Ascending aorta (tissue), 2 donors: ENCODE measurements at regions of chr12 and their contacts with region 1.

Region 1: DNA sequence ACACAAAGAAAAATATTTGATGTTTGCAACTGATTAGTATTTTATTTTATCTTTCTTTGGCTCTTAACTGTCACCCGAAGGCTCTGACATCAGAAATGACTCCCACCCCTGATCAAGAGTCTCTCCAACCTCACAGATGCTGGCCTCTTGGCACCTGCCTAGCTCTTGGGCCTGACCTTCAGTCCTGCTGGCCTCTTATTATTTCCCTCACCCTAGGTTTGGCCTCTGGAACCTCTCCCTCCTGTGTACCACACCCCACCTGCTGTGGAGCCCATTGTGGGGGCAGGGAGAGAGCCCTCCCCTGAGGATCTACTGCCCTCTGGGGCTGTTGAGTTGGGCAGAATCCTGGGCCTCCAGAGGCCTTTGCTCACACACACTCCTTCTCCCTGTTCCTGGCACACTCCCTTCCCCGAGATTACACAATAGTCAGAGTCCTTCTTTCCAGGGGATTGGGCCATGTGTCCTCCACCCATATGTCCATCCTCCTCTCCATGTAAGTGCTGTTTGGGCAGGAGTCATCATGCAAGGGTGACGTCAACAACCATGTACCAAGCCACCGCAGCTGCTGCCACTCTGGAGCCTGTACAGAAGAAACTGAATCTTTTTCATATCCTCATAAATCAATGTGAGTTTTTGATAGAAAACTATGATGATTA is 124.3 kb downstream of the RASSF9 start:
- DNase-seq: peak; percentile 8 to 82
- H3K4me3 ChIP-seq: no peak overlapping the region
- H3K27ac ChIP-seq: peak overlapping the region; percentile 48 to 77
- H3K4me1 ChIP-seq: peaks cover 0 to 10% of the 10 kb centered on the region in 2 donors
- H3K27me3 ChIP-seq: no peaks in the 10 kb centered on the region
- CTCF ChIP-seq: no peak

Region 2: DNA sequence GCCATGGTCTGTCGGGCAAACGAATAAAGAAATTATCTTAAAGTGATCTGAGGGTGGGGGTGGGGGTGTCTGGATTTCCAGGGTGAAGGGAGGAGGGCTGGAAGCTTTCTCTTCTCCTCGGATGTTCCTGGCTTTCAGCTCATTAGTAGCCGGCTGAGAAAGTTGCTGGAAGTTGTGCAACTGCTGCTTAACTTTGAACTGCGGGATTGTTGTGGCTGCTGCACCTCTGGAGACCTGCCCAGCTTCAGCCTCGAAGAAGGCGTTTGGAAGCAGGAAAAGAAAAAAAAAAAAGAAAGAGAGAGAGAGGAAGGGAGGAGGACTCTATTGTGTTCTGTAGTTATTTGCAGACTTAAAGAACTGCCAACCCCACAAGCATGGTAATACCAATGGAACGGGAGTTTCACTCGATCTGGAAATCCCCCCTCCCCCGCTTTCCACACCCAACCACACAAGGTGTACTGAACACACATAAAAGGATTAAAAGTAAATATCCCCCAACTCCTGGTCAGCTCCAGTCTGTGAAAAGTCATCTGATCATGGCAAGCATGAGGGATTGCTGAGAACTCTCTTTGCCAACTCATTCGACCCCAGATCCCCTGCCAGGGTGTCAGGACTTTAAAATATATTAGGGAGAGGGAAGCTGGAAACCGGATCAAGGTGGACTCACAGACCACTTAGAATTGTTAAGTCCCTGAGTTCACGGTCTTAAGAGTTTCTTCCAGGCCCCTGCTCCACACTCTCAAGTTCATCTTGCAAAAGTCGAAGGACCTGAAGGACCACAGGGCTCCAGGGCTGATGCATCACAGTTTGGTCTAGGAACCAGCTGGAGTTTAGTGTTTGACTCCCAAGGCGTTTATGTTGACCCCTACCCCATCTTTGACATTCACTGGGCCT is 124.6 kb after region 1 on chr12 and contains the start of gene RASSF9:
- intact Hi-C with region 1: loop called (anchors 10 kb)
- DNase-seq: peak in 1 of 2 donors; percentile 72
- H3K4me3 ChIP-seq: peak within 1 kb of the TSS; percentile 44 to 69
- H3K27ac ChIP-seq: peak within 1 kb of the TSS; percentile 63 to 84
- H3K4me1 ChIP-seq: peaks cover 0 to 7% of the 10 kb centered on the region in 2 donors
- H3K27me3 ChIP-seq: no peaks in the 10 kb centered on the region
- CTCF ChIP-seq: no peak
- total RNA-seq, gene RASSF9: 1.9 TPM

Region 3: GRCh38 chr12:87116780-87117179 is 1404.9 kb after region 1 on chr12:
- intact Hi-C with region 1: no loop called
- DNase-seq: no peak
- H3K4me3 ChIP-seq: no peak overlapping the region
- H3K27ac ChIP-seq: no peak overlapping the region
- H3K4me1 ChIP-seq: peaks cover 0 to 3% of the 10 kb centered on the region in 2 donors
- H3K27me3 ChIP-seq: no peaks in the 10 kb centered on the region
- CTCF ChIP-seq: no peak